Right lobe of liver (tissue), 6 donors: ENCODE measurements at regions of chr16 and their contacts with region 1.

Region 1: GRCh38 chr16:28317040-28317880 is 24.9 kb downstream of the SBK1 start:
- DNase-seq: peak in 2 of 3 donors; percentile 63 to 64
- ATAC-seq: peak; percentile 66 to 87 (median 85)
- H3K4me3 ChIP-seq: no peak overlapping the region
- H3K27ac ChIP-seq: no peak overlapping the region
- H3K4me1 ChIP-seq: no peaks in the 10 kb centered on the region
- H3K27me3 ChIP-seq: no peaks in the 10 kb centered on the region
- CTCF ChIP-seq: peak; percentile 82 to 95 (median 91)
- POLR2A ChIP-seq: no peak

Region 2: GRCh38 chr16:28231763-28232162 is 85.5 kb before region 1 on chr16:
- intact Hi-C with region 1: no loop called
- DNase-seq: no peak
- ATAC-seq: no peak
- H3K4me3 ChIP-seq: no peak overlapping the region
- H3K27ac ChIP-seq: no peak overlapping the region
- H3K4me1 ChIP-seq: no peaks in the 10 kb centered on the region
- H3K27me3 ChIP-seq: no peaks in the 10 kb centered on the region
- CTCF ChIP-seq: no peak
- POLR2A ChIP-seq: no peak

Region 3: GRCh38 chr16:28277537-28278388 is 39.5 kb before region 1 on chr16:
- intact Hi-C with region 1: loop called (anchors 2 to 5 kb)
- DNase-seq: peak; percentile 91 to 93 (median 92)
- ATAC-seq: peak; percentile 96 to 99 (median 98)
- H3K4me3 ChIP-seq: peak overlapping the region; percentile 26 to 40 (median 39)
- H3K27ac ChIP-seq: no peak overlapping the region
- H3K4me1 ChIP-seq: peaks cover 0 to 5% (median 0%) of the 10 kb centered on the region in 4 donors
- H3K27me3 ChIP-seq: no peaks in the 10 kb centered on the region
- CTCF ChIP-seq: peak; percentile 98 to 99 (median 98)
- POLR2A ChIP-seq: no peak